ENCODE measurements at regions of chr1 and their contacts with region 1.

Region 1: GRCh38 chr1:179882243-179883039 is at the start of gene TOR1AIP1:
- DNase-seq: peak; percentile 99
- H3K4me3 Mint-ChIP-seq: peak within 1 kb of the TSS; percentile 86
- H3K27ac Mint-ChIP-seq: peak within 1 kb of the TSS; percentile 96
- H3K4me1 Mint-ChIP-seq: peaks cover 50% of the 10 kb centered on the region
- H3K27me3 Mint-ChIP-seq: no peaks in the 10 kb centered on the region
- total RNA-seq, gene TOR1AIP1: 57.4 to 57.7 TPM

Region 2: GRCh38 chr1:179129702-179130473 is 752.6 kb before region 1 on chr1:
- CTCF ChIA-PET with region 1: no interaction called
- POLR2A ChIA-PET with region 1: no interaction called
- intact Hi-C with region 1: loop called (anchors 5 kb)
- DNase-seq: peak; percentile 27
- H3K4me3 Mint-ChIP-seq: peak overlapping the region; percentile 59
- H3K27ac Mint-ChIP-seq: peak overlapping the region; percentile 82
- H3K4me1 Mint-ChIP-seq: peaks cover 24% of the 10 kb centered on the region
- H3K27me3 Mint-ChIP-seq: no peaks in the 10 kb centered on the region

Region 3: DNA sequence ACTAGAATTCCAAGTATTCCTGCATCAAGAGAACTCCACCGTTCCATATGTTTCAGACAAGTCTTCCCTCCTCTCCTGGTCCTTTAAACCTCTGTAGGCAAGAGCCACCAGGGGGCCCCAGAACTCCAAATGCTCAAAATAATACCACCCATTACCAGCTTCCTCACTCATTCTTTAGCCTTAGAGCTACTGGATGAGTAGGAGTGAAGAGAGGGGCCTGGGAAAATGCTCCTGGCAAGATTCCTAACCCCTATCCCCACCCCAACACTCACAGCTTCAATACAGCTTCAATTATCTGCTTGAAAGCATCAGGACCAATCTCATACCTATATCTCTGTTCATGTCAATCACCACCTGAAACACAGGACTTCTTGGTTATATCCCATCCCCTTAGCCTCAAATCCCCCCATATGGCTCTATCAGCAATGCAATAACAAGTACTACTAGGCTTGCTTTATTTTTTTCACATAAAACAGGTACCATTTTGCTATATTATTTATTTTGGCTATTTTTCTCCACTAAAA is 14.6 kb before region 1 on chr1:
- CTCF ChIA-PET with region 1: interaction called, 12 read pairs
- POLR2A ChIA-PET with region 1: no interaction called
- intact Hi-C with region 1: no loop called
- DNase-seq: peak; percentile 63
- H3K4me3 Mint-ChIP-seq: no peak overlapping the region
- H3K27ac Mint-ChIP-seq: no peak overlapping the region
- H3K4me1 Mint-ChIP-seq: peaks cover 18% of the 10 kb centered on the region
- H3K27me3 Mint-ChIP-seq: no peaks in the 10 kb centered on the region

Region 4: DNA sequence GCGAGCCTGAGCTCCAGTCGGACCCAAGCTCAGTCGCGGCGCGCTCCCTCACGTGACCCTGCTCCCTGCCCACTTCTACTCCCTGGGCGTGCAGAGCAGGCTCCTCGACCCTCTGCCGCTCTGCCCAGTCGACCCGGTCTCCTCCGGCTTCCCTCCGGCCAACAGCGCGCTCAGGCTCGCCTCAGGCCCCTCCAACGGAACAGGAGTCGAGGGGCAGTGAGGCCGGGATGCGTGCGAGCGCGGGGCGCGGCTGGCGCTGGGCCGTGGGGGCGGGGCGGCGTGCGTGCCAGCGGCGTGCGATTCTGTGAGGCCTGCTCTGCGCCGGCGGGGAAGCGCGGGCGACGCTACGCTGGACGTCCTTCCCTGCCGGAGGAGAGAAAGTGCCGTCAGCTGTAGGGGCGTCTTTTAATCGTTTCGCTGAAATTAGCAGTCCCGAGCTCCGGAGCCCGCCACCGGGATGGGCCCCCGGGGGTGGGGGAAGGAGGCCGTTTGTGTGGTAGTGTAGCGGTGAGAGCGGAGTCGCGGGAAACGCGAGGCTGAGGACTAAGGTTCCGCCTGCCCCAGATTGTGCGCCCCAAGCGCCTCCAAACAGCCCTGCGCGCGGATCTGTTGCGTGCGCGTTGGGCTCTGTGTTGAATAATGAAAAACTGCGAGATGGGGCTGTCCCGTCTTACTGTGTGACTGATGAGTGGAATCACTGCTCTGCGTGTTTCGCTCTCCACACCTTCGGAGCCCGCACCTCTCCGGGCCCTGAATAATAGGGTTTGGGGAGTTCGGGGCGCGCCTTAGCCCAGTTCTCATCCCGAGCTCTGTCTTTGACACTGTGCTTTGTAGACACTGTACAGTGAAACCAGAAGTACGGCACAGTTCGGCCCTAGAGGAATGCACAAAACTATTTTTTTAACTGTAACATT is 620.2 kb after region 1 on chr1 and contains the start of gene ACBD6:
- CTCF ChIA-PET with region 1: no interaction called
- POLR2A ChIA-PET with region 1: no interaction called
- intact Hi-C with region 1: loop called (anchors 1 kb)
- DNase-seq: peak; percentile 93
- H3K4me3 Mint-ChIP-seq: peak within 1 kb of the TSS; percentile 96
- H3K27ac Mint-ChIP-seq: peak within 1 kb of the TSS; percentile 94
- H3K4me1 Mint-ChIP-seq: peaks cover 33% of the 10 kb centered on the region
- H3K27me3 Mint-ChIP-seq: no peaks in the 10 kb centered on the region
- total RNA-seq, gene ACBD6: 36.7 to 40.8 TPM

Region 5: GRCh38 chr1:181021811-181022434 is 1139.5 kb after region 1 on chr1:
- CTCF ChIA-PET with region 1: no interaction called
- POLR2A ChIA-PET with region 1: no interaction called
- intact Hi-C with region 1: loop called (anchors 5 kb)
- DNase-seq: peak; percentile 84
- H3K4me3 Mint-ChIP-seq: peak overlapping the region; percentile 94
- H3K27ac Mint-ChIP-seq: peak overlapping the region; percentile 97
- H3K4me1 Mint-ChIP-seq: peaks cover 37% of the 10 kb centered on the region
- H3K27me3 Mint-ChIP-seq: no peaks in the 10 kb centered on the region

Measured in activated CD4-positive, alpha-beta memory T cell treated with anti-CD3 and anti-CD28 coated beads for 36 hours (primary cell).